ENCODE measurements at regions of chr4 and their contacts with region 1.

Region 1: DNA sequence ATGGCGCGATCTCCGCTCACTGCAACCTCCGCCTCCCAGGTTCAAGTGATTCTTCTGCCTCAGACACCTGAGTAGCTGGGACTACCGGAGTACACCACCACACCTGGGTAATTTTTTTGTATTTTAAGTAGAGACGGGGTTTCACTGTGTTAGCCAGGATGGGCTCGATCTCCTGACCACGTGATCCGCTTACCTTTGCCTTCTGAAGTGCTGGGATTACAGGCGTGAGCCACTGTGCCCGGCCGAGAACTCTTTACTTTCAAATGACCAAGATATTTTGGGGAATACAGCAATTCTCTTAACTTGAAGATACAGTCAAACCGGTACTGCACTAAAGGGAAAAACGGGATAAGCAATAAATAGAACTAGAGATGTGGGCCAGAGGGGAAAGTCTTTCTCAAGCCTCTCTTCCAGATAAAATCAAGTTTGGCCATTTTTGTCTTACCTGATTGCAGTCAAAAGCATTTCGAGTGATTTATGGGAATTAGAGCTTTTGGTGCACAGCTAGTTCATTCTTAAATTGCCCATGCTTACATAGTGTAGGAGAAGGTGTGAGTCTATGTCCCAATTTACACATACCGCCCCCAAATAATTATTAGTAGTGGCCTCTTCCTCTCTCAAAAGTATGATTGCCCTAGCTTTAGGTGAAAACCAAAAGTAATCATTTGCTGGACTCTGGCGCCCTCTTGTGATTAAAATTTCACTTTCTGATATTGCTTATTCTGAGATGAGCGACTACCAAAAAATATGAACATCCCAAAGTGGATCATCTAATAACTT is 53.2 kb upstream of the ABCG2 start:
- DNase-seq: peak; percentile 45
- H3K4me3 ChIP-seq: no peak overlapping the region; a peak in 1 of 4 replicates
- H3K27ac ChIP-seq: no peak overlapping the region
- H3K4me1 ChIP-seq: no peaks in the 10 kb centered on the region
- H3K27me3 ChIP-seq: no peaks in the 10 kb centered on the region; the same call in 1 of the 2 replicates
- CTCF ChIP-seq: peak; percentile 79
- EP300 ChIP-seq: no peak
- RAD21 ChIP-seq: peak; percentile 96

Region 2: GRCh38 chr4:87679449-87680169 is 532.1 kb before region 1 on chr4:
- CTCF ChIA-PET with region 1: interaction called, 18 read pairs
- POLR2A ChIA-PET with region 1: no interaction called
- DNase-seq: peak; percentile 59
- H3K4me3 ChIP-seq: no peak overlapping the region
- H3K27ac ChIP-seq: no peak overlapping the region
- H3K4me1 ChIP-seq: no peaks in the 10 kb centered on the region
- H3K27me3 ChIP-seq: no peaks in the 10 kb centered on the region
- CTCF ChIP-seq: peak; percentile 90
- EP300 ChIP-seq: no peak
- RAD21 ChIP-seq: peak; percentile 91

Region 3: GRCh38 chr4:87848622-87849351 is 362.9 kb before region 1 on chr4:
- CTCF ChIA-PET with region 1: interaction called, 34 read pairs
- POLR2A ChIA-PET with region 1: no interaction called
- DNase-seq: peak; percentile 58
- H3K4me3 ChIP-seq: peak overlapping the region; percentile 24 to 38; a peak in 3 of 4 replicates
- H3K27ac ChIP-seq: no peak overlapping the region
- H3K4me1 ChIP-seq: peaks cover 0 to 3% of the 10 kb centered on the region in 2 experiments; a peak in 2 of 4 replicates
- H3K27me3 ChIP-seq: no peaks in the 10 kb centered on the region
- CTCF ChIP-seq: peak; percentile 70
- EP300 ChIP-seq: no peak
- RAD21 ChIP-seq: peak; percentile 66

Region 4: DNA sequence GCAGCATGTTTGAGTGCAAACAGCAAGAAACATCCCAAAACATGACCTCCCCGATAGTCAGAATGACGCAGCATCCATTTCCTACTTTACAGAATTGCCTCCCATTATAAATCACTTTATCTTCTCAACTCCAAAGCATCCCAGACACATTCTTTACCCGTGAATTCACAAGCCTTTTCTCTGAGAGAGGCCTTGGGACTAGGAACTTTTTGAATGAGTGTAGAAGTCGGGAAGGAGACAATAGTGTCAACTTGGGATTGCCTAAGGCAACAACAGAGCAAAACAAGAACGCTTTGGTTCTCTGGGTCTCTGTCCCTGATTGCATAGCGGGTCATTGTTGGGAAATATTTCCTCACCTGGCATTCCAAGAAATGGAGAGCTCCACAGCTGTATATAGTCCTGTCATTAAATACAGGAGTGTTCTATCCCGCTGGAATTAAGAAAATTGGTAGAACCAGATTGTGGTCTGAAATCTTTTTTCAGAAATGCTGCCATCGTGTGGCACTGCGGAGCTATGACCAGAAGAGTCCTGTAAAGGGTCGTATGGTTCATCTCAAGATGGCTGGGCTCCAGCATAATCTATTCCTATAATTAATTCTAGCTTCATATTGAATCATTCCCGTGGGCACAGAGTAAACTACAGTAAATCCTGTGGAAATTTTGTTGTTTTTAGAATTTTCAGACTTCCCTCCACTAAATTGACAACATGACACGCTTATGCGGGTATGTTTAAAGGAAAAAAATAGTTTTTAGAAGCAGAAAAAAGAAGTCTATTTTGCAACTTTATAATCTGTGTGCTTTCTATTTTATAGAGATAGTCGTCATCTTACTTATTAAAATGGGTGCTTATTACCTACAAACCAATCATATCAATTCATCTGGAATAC is 238.1 kb before region 1 on chr4:
- CTCF ChIA-PET with region 1: interaction called, 20 read pairs
- POLR2A ChIA-PET with region 1: no interaction called
- DNase-seq: peak; percentile 66
- H3K4me3 ChIP-seq: peak overlapping the region; percentile 29 to 36; a peak in 3 of 4 replicates
- H3K27ac ChIP-seq: peak overlapping the region in 1 of 2 experiments; percentile 69; a peak in 2 of 4 replicates
- H3K4me1 ChIP-seq: no peaks in the 10 kb centered on the region; a peak in 1 of 4 replicates
- H3K27me3 ChIP-seq: peaks cover 10% of the 10 kb centered on the region; the same call in 1 of the 2 replicates
- CTCF ChIP-seq: peak; percentile 88
- EP300 ChIP-seq: no peak
- RAD21 ChIP-seq: peak; percentile 77

Region 5: GRCh38 chr4:88033309-88033708 is 178.4 kb before region 1 on chr4:
- CTCF ChIA-PET with region 1: interaction called, 54 read pairs
- POLR2A ChIA-PET with region 1: no interaction called
- DNase-seq: peak; percentile 54
- H3K4me3 ChIP-seq: no peak overlapping the region; a peak in 1 of 4 replicates
- H3K27ac ChIP-seq: no peak overlapping the region
- H3K4me1 ChIP-seq: peaks cover 0 to 13% of the 10 kb centered on the region in 2 experiments; a peak in 1 of 4 replicates
- H3K27me3 ChIP-seq: no peaks in the 10 kb centered on the region
- CTCF ChIP-seq: peak; percentile 78
- EP300 ChIP-seq: no peak
- RAD21 ChIP-seq: peak; percentile 75

Region 6: DNA sequence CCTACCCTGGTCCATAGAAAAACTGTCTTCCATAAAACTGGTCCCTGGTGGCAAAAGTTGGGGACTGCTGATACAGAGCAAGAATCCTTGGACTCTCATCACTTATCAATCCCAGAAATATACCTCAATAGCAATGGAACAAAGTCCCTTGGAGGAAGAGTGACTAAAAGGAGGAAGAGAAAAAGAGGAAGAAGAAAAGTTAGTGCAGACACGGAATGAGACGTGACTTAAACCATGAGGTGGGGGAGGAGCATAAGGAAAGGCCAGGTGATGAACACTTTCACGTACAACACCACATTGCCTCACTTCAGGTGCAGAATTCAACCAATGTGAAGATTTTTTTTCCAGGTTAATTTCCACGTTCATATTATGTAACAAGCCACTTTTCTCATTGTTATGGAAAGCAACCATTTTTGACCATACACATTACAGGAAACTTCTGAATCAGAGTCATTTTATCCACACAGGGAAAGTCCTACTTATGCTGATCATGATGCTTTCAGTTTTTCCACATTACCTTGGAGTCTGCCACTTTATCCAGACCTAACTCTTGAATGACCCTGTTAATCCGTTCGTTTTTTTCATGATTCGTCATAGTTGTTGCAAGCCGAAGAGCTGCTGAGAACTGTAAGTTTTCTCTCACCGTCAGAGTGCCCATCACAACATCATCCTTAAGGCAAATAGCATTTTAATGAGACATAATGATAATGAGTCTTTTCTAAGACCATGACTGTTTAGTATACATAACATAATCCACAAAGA is 80.9 kb before region 1 on chr4:
- CTCF ChIA-PET with region 1: no interaction called
- POLR2A ChIA-PET with region 1: no interaction called
- DNase-seq: no peak
- H3K4me3 ChIP-seq: no peak overlapping the region
- H3K27ac ChIP-seq: no peak overlapping the region
- H3K4me1 ChIP-seq: no peaks in the 10 kb centered on the region
- H3K27me3 ChIP-seq: no peaks in the 10 kb centered on the region
- CTCF ChIP-seq: no peak
- EP300 ChIP-seq: no peak
- RAD21 ChIP-seq: no peak

Region 7: GRCh38 chr4:88189881-88190532 is 21.7 kb before region 1 on chr4:
- CTCF ChIA-PET with region 1: interaction called, 16 read pairs
- POLR2A ChIA-PET with region 1: no interaction called
- DNase-seq: no peak
- H3K4me3 ChIP-seq: no peak overlapping the region
- H3K27ac ChIP-seq: no peak overlapping the region
- H3K4me1 ChIP-seq: no peaks in the 10 kb centered on the region
- H3K27me3 ChIP-seq: no peaks in the 10 kb centered on the region; the same call in 1 of the 2 replicates
- CTCF ChIP-seq: no peak
- EP300 ChIP-seq: no peak
- RAD21 ChIP-seq: no peak

Region 8: DNA sequence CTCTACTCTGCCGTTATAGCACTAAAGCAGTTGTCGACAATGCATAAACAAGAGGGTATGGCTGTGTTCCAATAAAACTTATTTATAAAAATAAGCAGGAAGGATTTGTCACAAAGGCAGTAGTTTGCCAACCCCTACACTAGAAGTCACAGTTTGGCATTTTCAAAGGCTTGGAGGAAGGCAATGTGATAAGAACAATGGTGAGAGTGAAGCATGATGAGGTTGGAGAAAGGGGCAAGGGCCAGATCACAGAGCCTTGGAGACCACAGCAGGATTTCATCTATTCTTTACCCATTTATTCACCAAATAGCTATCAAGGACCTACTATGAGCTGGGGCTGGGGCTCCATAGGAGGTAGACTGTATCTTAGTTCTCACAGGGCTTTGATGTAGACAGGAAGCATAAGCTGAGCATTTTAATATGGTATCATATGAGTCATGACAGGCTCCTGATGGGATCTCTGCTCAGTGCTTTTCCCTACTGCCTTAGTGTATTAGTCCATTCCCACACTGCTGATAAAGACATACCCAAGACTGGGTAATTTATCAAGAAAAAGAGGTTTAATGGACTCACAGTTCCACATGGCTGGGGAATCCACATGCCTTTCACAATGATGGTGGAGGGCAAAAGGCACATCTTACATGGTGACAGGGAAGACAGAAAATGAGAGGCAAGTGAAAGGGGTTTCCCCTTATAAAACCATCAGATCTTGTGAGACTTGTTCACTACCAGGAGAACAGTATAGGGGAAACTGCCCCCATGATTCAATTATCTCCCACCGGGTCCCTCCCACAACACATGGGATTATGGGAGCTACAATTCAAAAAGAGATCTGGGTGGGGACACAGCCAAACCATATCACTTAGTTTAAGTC is 13.8 kb after region 1 on chr4:
- CTCF ChIA-PET with region 1: interaction called, 15 read pairs
- POLR2A ChIA-PET with region 1: no interaction called
- DNase-seq: no peak
- H3K4me3 ChIP-seq: no peak overlapping the region
- H3K27ac ChIP-seq: no peak overlapping the region
- H3K4me1 ChIP-seq: no peaks in the 10 kb centered on the region
- H3K27me3 ChIP-seq: no peaks in the 10 kb centered on the region
- CTCF ChIP-seq: no peak
- EP300 ChIP-seq: no peak
- RAD21 ChIP-seq: no peak

Region 9: GRCh38 chr4:88411473-88412096 is 199.9 kb after region 1 on chr4:
- CTCF ChIA-PET with region 1: no interaction called
- POLR2A ChIA-PET with region 1: no interaction called
- DNase-seq: no peak
- H3K4me3 ChIP-seq: no peak overlapping the region
- H3K27ac ChIP-seq: no peak overlapping the region
- H3K4me1 ChIP-seq: no peaks in the 10 kb centered on the region
- H3K27me3 ChIP-seq: no peaks in the 10 kb centered on the region
- CTCF ChIP-seq: no peak
- EP300 ChIP-seq: no peak
- RAD21 ChIP-seq: no peak

Measured in SK-N-SH (cell line).